ENCODE measurements at regions of chr4 and their contacts with region 1.

Region 1: DNA sequence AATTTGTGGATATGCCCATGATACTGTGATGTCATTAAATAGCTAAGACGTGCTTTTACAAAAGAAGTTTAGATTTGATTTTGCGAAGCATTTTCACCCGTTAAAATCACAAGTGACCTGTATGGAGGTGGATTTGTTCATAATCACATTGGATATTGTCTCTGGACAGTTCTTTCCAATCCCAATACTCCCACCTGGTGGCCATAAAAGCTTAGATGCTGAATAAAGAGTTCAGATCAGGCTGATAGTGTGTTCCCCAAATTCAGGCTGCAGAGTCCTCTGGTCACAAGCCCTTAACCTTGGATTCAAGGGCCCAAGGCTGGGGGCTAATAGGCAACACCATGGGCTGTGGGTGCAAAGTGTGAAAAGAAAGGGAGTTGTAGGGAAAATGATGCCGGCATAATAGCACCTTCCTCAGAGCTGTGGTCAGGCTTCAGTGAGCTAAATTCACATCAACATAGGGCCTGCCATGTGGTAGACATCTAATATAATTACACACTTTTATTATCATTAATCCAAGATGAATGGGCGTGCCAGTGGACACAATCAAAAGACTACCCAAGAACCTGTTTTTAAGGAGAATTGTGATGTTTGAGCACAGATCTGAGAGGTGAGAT is 28.1 kb downstream of the SMIM43 start:
- DNase-seq: no peak
- H3K4me3 ChIP-seq: no peak overlapping the region
- H3K27me3 ChIP-seq: no peaks in the 10 kb centered on the region
- CTCF ChIP-seq: peak; percentile 65

Region 2: GRCh38 chr4:121370729-121371325 is 366.0 kb before region 1 on chr4:
- CTCF ChIA-PET with region 1: interaction called, 25 read pairs
- POLR2A ChIA-PET with region 1: no interaction called
- DNase-seq: no peak
- H3K4me3 ChIP-seq: no peak overlapping the region
- H3K27me3 ChIP-seq: no peaks in the 10 kb centered on the region; the same call in 1 of the 2 replicates
- CTCF ChIP-seq: peak; percentile 66

Region 3: DNA sequence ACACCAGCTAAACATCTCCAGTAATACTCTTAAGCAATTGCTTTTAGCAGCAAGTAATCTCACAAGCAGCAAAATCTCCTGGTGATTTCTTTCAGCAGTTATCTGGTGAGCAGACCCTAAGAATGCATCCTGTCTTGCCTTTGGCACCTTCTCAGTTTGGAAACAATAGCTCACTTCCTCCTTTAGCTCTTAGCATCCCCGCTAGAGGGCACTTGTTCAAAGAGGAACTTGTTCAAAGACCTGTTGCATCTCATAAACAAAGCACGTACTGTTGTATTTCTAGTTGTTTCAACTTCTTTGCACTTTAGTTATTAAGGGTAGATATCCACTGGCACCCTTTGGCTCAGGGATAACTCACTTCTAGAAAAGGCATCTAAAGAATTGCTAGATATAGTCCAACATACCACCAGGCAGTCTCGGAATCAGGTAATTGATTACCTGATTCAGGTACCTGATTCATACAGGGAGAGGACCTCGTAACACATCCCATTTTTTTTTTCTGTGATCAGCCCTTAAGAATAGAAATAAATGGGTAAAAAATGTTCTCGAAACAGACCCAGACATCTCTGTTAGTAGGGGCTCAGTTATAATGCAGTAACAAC is 274.1 kb before region 1 on chr4:
- CTCF ChIA-PET with region 1: interaction called, 23 read pairs
- POLR2A ChIA-PET with region 1: no interaction called
- DNase-seq: peak; percentile 8
- H3K4me3 ChIP-seq: no peak overlapping the region
- H3K27me3 ChIP-seq: 0 out of 2 replicates have a peak, but pooled peaks cover 1% of the 10 kb centered on the region
- CTCF ChIP-seq: peak; percentile 82

Region 4: DNA sequence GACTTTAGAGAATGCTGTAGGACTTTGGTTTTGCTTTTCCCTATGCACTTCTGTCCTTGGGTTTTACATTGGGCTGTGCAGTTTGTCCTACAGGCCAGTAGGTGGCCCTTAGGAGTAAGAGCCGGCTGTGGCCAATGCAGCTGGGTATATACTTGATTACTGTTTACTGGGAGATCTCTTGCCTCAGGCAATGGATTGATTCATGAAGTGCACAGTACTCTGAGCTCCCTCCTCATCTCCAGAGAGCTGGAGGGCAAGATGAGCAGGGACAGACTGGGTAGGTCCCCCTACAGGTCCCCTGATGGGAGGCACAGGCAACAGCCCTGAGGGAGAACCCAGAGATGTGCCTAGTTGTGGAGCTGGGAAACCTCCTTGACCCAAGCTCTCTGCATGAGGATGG is 252.2 kb before region 1 on chr4:
- CTCF ChIA-PET with region 1: interaction called, 59 read pairs
- POLR2A ChIA-PET with region 1: no interaction called
- DNase-seq: no peak
- H3K4me3 ChIP-seq: no peak overlapping the region
- H3K27me3 ChIP-seq: no peaks in the 10 kb centered on the region
- CTCF ChIP-seq: peak; percentile 90

Region 5: GRCh38 chr4:121696581-121697461 is 40.0 kb before region 1 on chr4 and contains the start of gene ANXA5:
- CTCF ChIA-PET with region 1: interaction called, 13 read pairs
- POLR2A ChIA-PET with region 1: interaction called, 3 read pairs
- DNase-seq: no peak
- H3K4me3 ChIP-seq: peak within 1 kb of the TSS; percentile 97
- H3K27me3 ChIP-seq: no peaks in the 10 kb centered on the region
- CTCF ChIP-seq: peak; percentile 64
- polyA plus RNA-seq, gene ANXA5: 591 and 1,019 TPM in 2 replicates

Region 6: DNA sequence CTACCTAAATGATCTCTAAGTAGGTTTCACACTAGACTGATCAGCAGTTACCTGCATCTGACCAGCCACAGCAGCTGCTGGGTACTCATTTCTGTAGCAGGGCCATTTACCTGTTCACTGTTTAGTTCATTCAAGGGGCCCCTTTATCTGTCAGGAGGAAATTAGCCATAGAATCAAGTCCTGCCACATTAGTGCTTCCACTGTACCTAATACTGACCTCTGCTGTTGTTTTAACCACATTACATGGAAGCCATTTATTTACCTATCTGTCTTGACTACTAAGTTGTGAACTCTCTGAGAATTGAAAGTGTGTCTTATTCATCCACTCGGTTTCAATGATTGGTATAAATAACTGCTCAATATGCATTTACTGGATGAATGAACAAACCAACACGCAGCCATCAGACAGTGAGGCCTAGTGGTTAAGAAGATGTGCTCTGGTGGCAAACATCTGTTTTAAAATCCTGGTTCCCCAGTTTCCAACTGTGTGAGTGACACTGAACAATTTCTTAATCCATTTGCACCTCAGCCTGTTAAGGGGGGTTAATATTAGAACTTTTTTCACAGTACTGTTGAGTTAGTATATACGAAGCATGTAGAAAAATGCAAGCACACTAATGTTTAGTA is 10.1 kb before region 1 on chr4:
- CTCF ChIA-PET with region 1: interaction called, 14 read pairs
- POLR2A ChIA-PET with region 1: no interaction called
- DNase-seq: no peak
- H3K4me3 ChIP-seq: no peak overlapping the region
- H3K27me3 ChIP-seq: no peaks in the 10 kb centered on the region
- CTCF ChIP-seq: peak; percentile 69

Region 7: DNA sequence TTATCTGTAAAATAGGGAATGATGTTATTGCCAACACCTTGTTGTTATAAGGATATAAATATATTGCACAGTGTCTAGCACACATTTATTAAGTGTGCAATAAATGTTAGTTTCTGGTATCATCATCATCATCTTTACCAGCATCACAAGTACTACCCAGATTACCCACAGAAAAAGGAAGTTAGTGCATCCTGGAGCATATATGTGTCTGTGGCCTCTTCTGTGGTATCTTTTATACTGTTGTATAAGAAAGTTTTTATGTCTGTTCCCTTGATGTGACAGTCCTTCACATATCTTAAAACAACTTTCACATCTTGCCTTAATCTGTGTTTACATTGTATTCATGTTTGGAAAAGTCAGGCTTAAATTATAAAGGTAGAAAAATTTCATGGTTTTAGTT is 74.3 kb after region 1 on chr4:
- CTCF ChIA-PET with region 1: no interaction called
- POLR2A ChIA-PET with region 1: no interaction called
- DNase-seq: no peak
- H3K4me3 ChIP-seq: no peak overlapping the region
- H3K27me3 ChIP-seq: no peaks in the 10 kb centered on the region
- CTCF ChIP-seq: no peak